ENCODE measurements at regions of chr1 and their contacts with region 1.

Region 1: DNA sequence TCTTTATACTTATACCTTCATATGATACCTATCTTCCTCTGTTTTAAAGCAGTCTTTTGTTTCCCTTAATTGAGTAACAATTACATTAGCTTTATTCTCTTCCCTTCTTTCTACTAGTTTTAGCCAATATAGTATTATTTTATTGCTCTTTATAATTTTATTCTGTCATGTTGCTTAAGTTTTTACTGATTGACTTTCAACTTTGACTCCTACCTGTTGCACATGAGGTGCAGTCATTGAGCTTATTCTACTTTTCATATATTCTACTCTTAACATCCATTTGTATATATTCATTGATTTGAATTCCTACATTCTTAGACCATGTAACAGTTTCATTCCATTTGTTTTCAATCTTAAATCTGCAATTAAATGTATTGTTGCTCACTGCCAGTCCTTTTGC is 49.2 kb downstream of the AGO3 start:
- DNase-seq: no peak
- H3K4me3 ChIP-seq: no peak overlapping the region
- H3K27ac ChIP-seq: no peak overlapping the region
- H3K4me1 ChIP-seq: no peaks in the 10 kb centered on the region
- H3K27me3 ChIP-seq: no peaks in the 10 kb centered on the region
- CTCF ChIP-seq: no peak

Region 2: DNA sequence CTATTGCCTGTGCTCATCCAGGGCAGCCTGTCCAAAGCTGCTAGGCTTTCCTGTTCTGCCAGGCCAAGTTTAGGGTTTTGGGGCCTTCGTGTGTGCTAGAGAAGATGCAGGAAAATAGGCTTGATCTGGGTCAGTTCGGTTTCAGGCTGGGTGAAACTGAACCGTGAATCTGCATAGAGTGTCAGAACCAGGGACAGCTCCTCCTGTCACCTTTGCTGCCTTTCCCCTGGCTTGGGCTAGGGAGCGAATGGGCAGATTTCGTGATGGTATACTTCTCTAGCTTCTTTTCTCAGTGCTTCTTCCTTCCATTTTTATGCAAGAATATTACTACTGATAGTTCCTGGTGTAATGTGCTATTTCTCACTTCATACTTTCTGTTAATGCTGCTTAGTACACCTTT is 103.1 kb before region 1 on chr1:
- CTCF ChIA-PET with region 1: no interaction called
- dilution Hi-C with region 1: no loop called
- in situ Hi-C with region 1: no loop called
- intact Hi-C with region 1: no loop called
- DNase-seq: no peak
- H3K4me3 ChIP-seq: no peak overlapping the region
- H3K27ac ChIP-seq: no peak overlapping the region
- H3K4me1 ChIP-seq: no peaks in the 10 kb centered on the region
- H3K27me3 ChIP-seq: no peaks in the 10 kb centered on the region
- CTCF ChIP-seq: no peak

Region 3: GRCh38 chr1:35947547-35947946 is 32.5 kb before region 1 on chr1:
- CTCF ChIA-PET with region 1: no interaction called
- dilution Hi-C with region 1: no loop called
- in situ Hi-C with region 1: no loop called
- intact Hi-C with region 1: no loop called
- DNase-seq: no peak
- H3K4me3 ChIP-seq: no peak overlapping the region
- H3K27ac ChIP-seq: no peak overlapping the region
- H3K4me1 ChIP-seq: no peaks in the 10 kb centered on the region
- H3K27me3 ChIP-seq: no peaks in the 10 kb centered on the region
- CTCF ChIP-seq: no peak

Region 4: DNA sequence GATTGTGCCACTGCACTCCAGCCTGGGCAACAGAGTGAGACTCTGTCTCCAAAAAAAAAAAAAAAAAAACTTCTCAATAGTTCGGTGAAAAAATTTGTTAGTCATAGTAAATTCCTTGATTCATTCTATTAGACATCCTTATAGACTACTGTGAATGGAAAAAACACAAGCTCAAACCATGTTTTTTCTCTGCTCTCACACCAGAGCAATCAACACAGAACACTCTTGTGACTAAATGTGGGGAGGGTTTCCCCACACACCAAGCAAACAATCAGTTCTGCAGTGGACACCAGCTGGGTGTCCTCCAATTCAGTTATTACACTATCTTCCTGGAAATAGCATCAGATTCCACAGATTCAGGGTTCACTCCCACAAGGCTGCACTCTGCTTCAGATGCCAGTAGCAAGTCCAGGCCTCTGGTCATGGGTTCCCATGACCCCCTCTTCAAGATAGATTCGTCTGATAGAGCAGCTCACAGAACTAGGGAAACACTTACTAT is 34.7 kb after region 1 on chr1:
- CTCF ChIA-PET with region 1: no interaction called
- dilution Hi-C with region 1: loop called (anchors 5 kb)
- in situ Hi-C with region 1: no loop called
- intact Hi-C with region 1: no loop called
- DNase-seq: no peak
- H3K4me3 ChIP-seq: no peak overlapping the region
- H3K27ac ChIP-seq: no peak overlapping the region
- H3K4me1 ChIP-seq: no peaks in the 10 kb centered on the region
- H3K27me3 ChIP-seq: no peaks in the 10 kb centered on the region
- CTCF ChIP-seq: no peak

Region 5: DNA sequence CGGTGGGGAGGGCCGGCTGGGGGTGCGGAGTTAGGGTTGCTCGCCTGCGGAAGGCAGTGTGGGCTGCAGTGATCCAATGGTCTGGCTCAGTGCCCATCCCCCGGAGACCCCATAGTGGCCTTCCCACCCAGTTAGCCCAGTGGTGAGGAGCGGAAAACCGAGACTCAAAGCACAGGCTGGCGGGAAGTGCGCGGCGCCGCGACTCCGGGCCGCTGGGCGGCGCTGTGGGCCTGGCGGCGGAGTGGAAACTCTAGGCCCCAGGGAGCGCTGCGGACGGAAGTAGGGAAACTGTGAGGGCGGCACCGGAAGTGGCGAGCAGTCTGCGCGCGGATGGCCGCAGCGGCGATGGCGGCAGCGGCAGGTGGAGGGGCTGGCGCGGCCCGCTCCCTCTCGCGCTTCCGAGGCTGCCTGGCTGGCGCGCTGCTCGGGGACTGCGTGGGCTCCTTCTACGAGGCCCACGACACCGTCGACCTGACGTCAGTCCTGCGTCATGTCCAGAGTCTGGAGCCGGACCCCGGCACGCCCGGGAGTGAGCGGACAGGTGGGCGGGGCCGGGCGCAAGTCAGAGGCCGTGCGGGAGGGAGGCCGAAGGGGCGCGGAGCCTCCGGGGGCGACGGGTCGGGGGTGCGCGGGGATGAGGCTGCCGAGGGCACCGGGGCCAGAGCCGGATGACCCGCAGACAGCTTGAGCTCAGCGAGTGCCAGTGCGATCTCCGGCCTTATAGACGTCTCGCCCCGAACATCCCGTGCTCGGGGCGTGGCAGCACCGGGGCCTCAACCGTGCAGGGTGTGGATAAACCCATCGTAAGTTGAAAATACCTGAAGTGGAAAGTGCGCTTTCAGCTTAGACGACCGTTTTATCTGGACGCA is 108.7 kb after region 1 on chr1 and contains the start of gene ADPRS:
- CTCF ChIA-PET with region 1: no interaction called
- dilution Hi-C with region 1: no loop called
- in situ Hi-C with region 1: no loop called
- intact Hi-C with region 1: no loop called
- DNase-seq: peak; percentile 83
- H3K4me3 ChIP-seq: peak within 1 kb of the TSS; percentile 79 to 96 (median 89)
- H3K27ac ChIP-seq: peak within 1 kb of the TSS; percentile 74
- H3K4me1 ChIP-seq: peaks cover 22% of the 10 kb centered on the region
- H3K27me3 ChIP-seq: no peaks in the 10 kb centered on the region
- CTCF ChIP-seq: peak; percentile 86 to 99
- total RNA-seq, gene ADPRS: 33.7 to 34.3 TPM

Measured in mammary epithelial cell (primary cell).